GM12878 (cell line): ENCODE measurements at regions of chr14 and their contacts with region 1.

Region 1: DNA sequence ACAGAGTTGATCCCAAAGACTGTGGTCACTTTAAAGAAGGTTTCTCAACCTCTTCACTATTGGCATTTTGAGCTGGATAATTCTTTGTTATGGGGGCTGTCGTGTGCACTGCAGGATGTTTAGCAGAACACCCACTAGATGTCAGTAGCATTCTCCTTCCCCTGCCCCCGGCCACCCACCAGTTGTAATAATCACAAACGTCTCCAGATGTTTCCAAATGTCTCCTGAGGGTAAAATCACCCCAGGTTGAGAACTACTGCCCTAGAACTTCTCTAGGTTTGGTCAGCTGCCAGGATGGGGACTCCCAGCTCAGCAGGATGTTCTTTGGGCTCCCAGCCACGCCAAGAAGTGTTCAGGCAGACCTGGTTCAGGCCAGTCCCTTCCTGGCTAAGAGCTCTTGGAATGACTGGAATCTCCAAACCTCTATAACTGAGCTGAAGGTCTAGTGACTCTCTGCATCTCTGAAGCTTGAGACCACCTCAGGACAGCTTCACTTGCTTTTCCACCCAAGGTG is 12.5 kb upstream of the AJUBA start:
- DNase-seq: no peak
- ATAC-seq: peak; percentile 94
- H3K4me3 ChIP-seq: no peak overlapping the region
- H3K27ac ChIP-seq: no peak overlapping the region
- H3K4me1 ChIP-seq: no peaks in the 10 kb centered on the region
- H3K27me3 ChIP-seq: no peaks in the 10 kb centered on the region
- CTCF ChIP-seq: peak; percentile 65 to 75 (median 67)
- EP300 ChIP-seq: no peak
- POLR2A ChIP-seq: no peak
- RAD21 ChIP-seq: peak; percentile 64

Region 2: GRCh38 chr14:22973217-22974032 is 21.4 kb before region 1 on chr14:
- CTCF ChIA-PET with region 1: interaction called, 370 read pairs
- POLR2A ChIA-PET with region 1: interaction called, 4 read pairs
- RAD21 ChIA-PET with region 1: interaction called, 9 read pairs
- SMC1A ChIA-PET with region 1: interaction called, 11 read pairs
- in situ Hi-C with region 1: no loop called
- intact Hi-C with region 1: no loop called
- DNase-seq: no peak
- ATAC-seq: peak; percentile 85
- H3K4me3 ChIP-seq: no peak overlapping the region
- H3K27ac ChIP-seq: no peak overlapping the region
- H3K4me1 ChIP-seq: no peaks in the 10 kb centered on the region
- H3K27me3 ChIP-seq: no peaks in the 10 kb centered on the region
- CTCF ChIP-seq: peak; percentile 65 to 82 (median 70)
- EP300 ChIP-seq: no peak
- POLR2A ChIP-seq: no peak
- RAD21 ChIP-seq: peak; percentile 61

Region 3: GRCh38 chr14:23013054-23013748 is 18.4 kb after region 1 on chr14:
- CTCF ChIA-PET with region 1: interaction called, 108 read pairs
- POLR2A ChIA-PET with region 1: interaction called, 3 read pairs
- RAD21 ChIA-PET with region 1: interaction called, 5 read pairs
- SMC1A ChIA-PET with region 1: interaction called, 67 read pairs
- in situ Hi-C with region 1: no loop called
- intact Hi-C with region 1: no loop called
- DNase-seq: no peak
- ATAC-seq: no peak
- H3K4me3 ChIP-seq: no peak overlapping the region
- H3K27ac ChIP-seq: no peak overlapping the region
- H3K4me1 ChIP-seq: peaks cover 9% of the 10 kb centered on the region; the same call in 1 of the 2 replicates
- H3K27me3 ChIP-seq: no peaks in the 10 kb centered on the region
- CTCF ChIP-seq: no peak
- EP300 ChIP-seq: no peak
- POLR2A ChIP-seq: no peak
- RAD21 ChIP-seq: no peak

Region 4: DNA sequence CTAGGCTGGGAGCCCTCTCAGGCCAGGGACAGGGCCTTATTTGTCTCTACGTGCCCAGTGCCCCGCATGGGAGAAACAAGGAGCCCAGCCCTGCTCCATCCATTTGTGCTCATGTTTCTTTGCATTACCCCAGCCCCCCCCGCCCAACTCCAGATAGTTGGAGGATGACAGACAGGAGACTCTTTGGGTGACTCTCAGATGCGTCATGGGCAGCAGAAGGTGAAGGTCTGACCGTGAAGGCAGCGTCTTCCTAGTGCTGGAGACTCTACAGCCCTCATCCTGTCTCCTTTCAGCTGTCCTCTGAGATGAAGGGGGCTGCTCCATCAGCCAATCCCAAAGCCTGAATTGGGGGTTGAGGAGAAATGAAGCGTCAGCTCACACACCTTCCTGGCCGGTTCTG is 46.9 kb after region 1 on chr14:
- CTCF ChIA-PET with region 1: interaction called, 853 read pairs
- POLR2A ChIA-PET with region 1: no interaction called
- RAD21 ChIA-PET with region 1: no interaction called
- SMC1A ChIA-PET with region 1: interaction called, 5 read pairs
- in situ Hi-C with region 1: no loop called
- intact Hi-C with region 1: no loop called
- DNase-seq: no peak
- ATAC-seq: no peak
- H3K4me3 ChIP-seq: no peak overlapping the region
- H3K27ac ChIP-seq: no peak overlapping the region
- H3K4me1 ChIP-seq: no peaks in the 10 kb centered on the region
- H3K27me3 ChIP-seq: no peaks in the 10 kb centered on the region; a peak in 2 of 4 replicates
- CTCF ChIP-seq: no peak
- EP300 ChIP-seq: no peak
- POLR2A ChIP-seq: no peak
- RAD21 ChIP-seq: no peak

Region 5: GRCh38 chr14:23057757-23058653 is 63.2 kb after region 1 on chr14:
- CTCF ChIA-PET with region 1: interaction called, 853 read pairs
- POLR2A ChIA-PET with region 1: interaction called, 8 read pairs
- RAD21 ChIA-PET with region 1: interaction called, 224 read pairs
- SMC1A ChIA-PET with region 1: interaction called, 156 read pairs
- in situ Hi-C with region 1: loop called (anchors 5 kb)
- intact Hi-C with region 1: loop called (anchors 1 kb)
- DNase-seq: peak; percentile 40
- ATAC-seq: peak; percentile 82
- H3K4me3 ChIP-seq: peak overlapping the region; percentile 79
- H3K27ac ChIP-seq: no peak overlapping the region
- H3K4me1 ChIP-seq: peaks cover 12% of the 10 kb centered on the region
- H3K27me3 ChIP-seq: no peaks in the 10 kb centered on the region
- CTCF ChIP-seq: peak; percentile 92 to 97 (median 96); a peak in 5 of 6 replicates
- EP300 ChIP-seq: no peak
- POLR2A ChIP-seq: peak; percentile 74
- RAD21 ChIP-seq: peak; percentile 78

Region 6: DNA sequence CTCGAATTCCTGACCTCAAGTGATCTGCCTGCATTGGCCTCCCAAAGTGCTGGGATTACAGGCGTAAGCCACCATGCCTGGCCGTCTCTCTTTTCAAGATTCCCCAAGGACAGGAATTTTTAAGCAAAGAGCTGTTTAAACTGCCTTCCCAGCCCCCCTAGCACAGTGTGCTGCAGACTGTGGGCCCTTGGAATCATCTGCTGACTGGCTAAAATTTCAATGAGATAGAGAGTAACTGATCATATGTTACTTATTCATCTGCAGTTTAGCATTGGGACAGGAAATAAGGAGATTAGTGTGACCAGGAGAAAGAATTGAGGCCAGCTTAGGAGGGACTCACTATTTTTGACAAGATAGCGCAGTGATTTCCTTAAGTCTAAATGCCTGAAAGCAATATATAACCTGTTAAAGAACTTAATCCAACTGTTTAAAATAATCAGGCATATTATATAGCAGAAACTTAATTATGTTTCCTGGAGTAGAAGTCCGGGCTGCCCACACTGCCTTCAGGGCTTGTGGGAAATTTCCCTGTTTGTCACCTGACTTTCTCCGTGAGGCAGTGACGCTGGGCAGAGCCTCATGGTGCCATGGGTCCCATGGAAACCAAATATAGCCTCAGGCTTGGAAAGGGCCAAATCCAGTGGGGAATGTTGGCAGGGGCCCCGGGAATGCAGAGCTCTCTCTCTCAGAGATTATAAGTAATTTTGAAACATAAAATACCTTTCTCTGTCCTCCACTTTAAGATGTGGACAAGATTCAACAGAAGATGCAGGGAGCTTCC is 147.0 kb after region 1 on chr14:
- CTCF ChIA-PET with region 1: no interaction called
- POLR2A ChIA-PET with region 1: no interaction called
- RAD21 ChIA-PET with region 1: no interaction called
- SMC1A ChIA-PET with region 1: no interaction called
- in situ Hi-C with region 1: no loop called
- intact Hi-C with region 1: no loop called
- DNase-seq: no peak
- ATAC-seq: no peak
- H3K4me3 ChIP-seq: no peak overlapping the region
- H3K27ac ChIP-seq: no peak overlapping the region
- H3K4me1 ChIP-seq: no peaks in the 10 kb centered on the region
- H3K27me3 ChIP-seq: peaks cover 3% of the 10 kb centered on the region in 2 experiments; a peak in 3 of 4 replicates
- CTCF ChIP-seq: no peak
- EP300 ChIP-seq: no peak
- POLR2A ChIP-seq: no peak
- RAD21 ChIP-seq: no peak